ENCODE measurements at regions of chr10 and their contacts with region 1.

Region 1: DNA sequence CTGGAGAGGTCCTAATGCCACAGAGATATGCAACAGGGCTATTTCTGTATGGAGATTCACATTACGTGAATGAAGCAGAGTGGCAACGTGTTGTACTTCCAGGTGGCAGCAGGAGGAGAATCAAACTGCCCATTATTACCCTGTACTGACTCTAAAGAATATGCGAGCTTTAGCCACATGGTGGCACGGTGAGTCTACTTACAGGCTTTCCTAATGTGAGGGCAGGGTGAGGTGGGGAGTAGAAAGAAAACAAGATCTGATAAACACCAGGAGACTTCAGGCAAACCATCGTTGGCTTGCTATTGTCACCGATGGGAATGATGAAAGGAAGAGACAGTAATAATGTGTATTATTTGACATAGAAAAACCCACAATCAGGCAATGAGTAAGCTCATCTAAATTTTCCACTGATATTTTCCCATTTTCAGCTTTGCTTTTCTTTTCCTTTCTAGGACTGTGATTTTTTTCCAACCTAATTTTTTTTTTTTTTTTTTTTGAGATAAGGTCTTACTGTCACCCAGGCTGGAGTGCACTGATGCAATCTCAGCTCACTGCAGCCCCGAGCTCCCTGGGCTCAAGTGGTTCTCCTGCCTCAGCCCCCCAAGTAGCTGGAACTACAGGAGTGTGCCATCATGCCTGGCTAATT is 164.3 kb downstream of the BTAF1 start:
- DNase-seq: peak; percentile 29
- H3K4me3 ChIP-seq: no peak overlapping the region
- H3K27ac ChIP-seq: peak overlapping the region in 1 of 4 donors; percentile 33
- H3K4me1 ChIP-seq: peaks cover 0 to 10% (median 0%) of the 10 kb centered on the region in 3 donors
- H3K27me3 ChIP-seq: no peaks in the 10 kb centered on the region
- CTCF ChIP-seq: peak; percentile 67 to 93 (median 78)
- POLR2A ChIP-seq: no peak

Region 2: DNA sequence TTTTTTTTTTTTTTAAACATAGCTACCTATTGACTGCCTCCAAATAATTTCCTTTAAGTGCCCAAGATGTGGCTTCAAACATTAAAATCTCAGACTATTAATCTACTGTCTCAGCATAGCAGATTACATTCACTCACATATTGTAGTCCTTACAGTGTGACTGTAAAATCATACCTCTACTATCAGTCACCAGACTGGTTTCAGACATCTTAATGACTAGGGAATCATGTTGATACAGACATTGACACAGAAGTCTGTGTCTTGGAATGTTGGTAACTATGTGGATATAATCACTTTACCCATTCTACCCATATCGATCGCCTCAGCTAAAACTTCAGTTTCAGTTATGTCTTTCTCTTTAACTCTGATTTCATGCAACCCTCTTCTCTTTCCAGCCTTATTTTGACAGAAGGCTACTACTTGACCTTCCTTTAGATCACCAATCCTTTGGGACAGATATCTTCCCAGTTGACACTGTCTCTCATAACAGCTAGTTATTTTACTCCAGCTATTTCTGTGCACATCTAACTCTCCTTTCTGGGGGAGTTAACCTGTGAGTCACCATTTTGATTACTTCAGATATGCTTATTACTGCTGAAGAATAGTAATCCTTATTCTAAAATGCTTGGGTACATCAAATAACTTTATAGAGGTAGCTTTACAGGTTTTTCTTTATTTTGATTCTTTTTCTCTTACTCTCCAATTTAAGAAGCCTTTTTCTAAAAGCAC is 282.6 kb before region 1 on chr10:
- intact Hi-C with region 1: no loop called
- DNase-seq: no peak
- H3K4me3 ChIP-seq: no peak overlapping the region
- H3K27ac ChIP-seq: no peak overlapping the region
- H3K4me1 ChIP-seq: peaks cover 0 to 58% (median 39%) of the 10 kb centered on the region in 3 donors
- H3K27me3 ChIP-seq: no peaks in the 10 kb centered on the region
- CTCF ChIP-seq: no peak
- POLR2A ChIP-seq: no peak

Region 3: DNA sequence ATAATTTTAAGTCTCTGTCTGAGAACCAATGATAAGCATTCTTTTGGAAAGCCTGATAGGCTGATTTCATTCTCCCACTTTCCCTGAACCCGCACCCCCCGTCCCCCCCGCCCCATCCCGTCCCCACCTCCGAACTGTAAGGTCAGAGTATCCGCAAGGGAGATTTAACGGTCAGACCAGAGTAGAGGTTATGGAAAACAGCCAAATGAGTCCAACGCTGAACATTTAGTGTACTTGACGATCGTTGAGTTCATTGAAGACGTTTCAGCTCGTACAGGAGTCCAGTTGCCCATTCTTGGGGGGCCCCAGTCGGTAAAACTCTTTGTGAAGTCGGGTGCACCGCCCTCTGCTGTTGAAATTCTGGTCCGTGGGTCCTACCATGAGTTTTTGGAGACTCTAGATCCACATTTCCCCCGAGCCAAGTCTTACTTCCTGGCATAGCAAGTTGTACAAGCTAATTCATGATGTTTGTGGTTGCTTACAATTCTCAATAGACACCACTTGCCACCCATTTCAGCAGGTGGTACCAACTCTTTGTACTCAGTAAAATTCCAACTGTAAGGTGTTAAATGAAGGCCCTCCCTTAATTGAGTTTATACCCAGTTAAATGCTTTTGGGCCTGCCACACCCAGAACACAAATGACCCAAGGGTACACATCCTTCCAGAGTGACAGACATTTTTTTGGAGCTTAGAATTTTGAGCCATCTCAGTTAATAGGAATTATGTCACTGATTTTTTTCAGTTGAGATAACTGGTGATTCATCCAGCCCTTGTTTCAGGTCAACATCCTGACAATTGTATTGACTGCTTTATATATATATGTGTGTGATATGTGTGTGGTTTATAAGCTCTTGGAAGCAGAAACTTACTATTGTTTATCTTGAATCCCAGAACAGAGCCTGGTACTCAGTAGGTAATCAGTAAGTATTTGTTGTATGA is 204.3 kb after region 1 on chr10:
- intact Hi-C with region 1: loop called (anchors 2 kb)
- DNase-seq: no peak
- H3K4me3 ChIP-seq: peak overlapping the region; percentile 82 to 100 (median 90)
- H3K27ac ChIP-seq: peak overlapping the region; percentile 92 to 100 (median 96)
- H3K4me1 ChIP-seq: peaks cover 0 to 27% (median 0%) of the 10 kb centered on the region in 3 donors
- H3K27me3 ChIP-seq: no peaks in the 10 kb centered on the region
- CTCF ChIP-seq: peak; percentile 44 to 62 (median 50)
- POLR2A ChIP-seq: no peak

Region 4: GRCh38 chr10:92436611-92437010 is 348.7 kb after region 1 on chr10:
- intact Hi-C with region 1: loop called (anchors 5 kb)
- DNase-seq: no peak
- H3K4me3 ChIP-seq: no peak overlapping the region
- H3K27ac ChIP-seq: no peak overlapping the region
- H3K4me1 ChIP-seq: peaks cover 0 to 6% (median 0%) of the 10 kb centered on the region in 3 donors
- H3K27me3 ChIP-seq: no peaks in the 10 kb centered on the region
- CTCF ChIP-seq: no peak
- POLR2A ChIP-seq: no peak